ENCODE measurements at regions of chr11 and their contacts with region 1.

Region 1: GRCh38 chr11:107898270-107898669 is 30.0 kb upstream of the RAB39A start:
- DNase-seq: peak in 3 of 14 experiments; percentile 35 to 47 (median 36)
- ATAC-seq: peak; percentile 61
- H3K4me3 ChIP-seq: no peak overlapping the region
- H3K4me3 Mint-ChIP-seq: no peak overlapping the region
- H3K27ac ChIP-seq: no peak overlapping the region
- H3K27ac Mint-ChIP-seq: no peak overlapping the region
- H3K4me1 ChIP-seq: no peaks in the 10 kb centered on the region
- H3K4me1 Mint-ChIP-seq: no peaks in the 10 kb centered on the region
- H3K27me3 ChIP-seq: no peaks in the 10 kb centered on the region
- H3K27me3 Mint-ChIP-seq: peaks cover 4% of the 10 kb centered on the region
- CTCF ChIP-seq: peak; percentile 66

Region 2: GRCh38 chr11:107549253-107549953 is 348.9 kb before region 1 on chr11:
- CTCF ChIA-PET with region 1: no interaction called
- POLR2A ChIA-PET with region 1: no interaction called
- intact Hi-C with region 1: loop called in 1 of 2 experiments (anchors 5 kb)
- DNase-seq: peak in 7 of 14 experiments; percentile 4 to 69 (median 36)
- ATAC-seq: peak; percentile 67
- H3K4me3 ChIP-seq: no peak overlapping the region
- H3K4me3 Mint-ChIP-seq: no peak overlapping the region
- H3K27ac ChIP-seq: no peak overlapping the region
- H3K27ac Mint-ChIP-seq: no peak overlapping the region
- H3K4me1 ChIP-seq: no peaks in the 10 kb centered on the region
- H3K4me1 Mint-ChIP-seq: peaks cover 4% of the 10 kb centered on the region
- H3K27me3 ChIP-seq: no peaks in the 10 kb centered on the region
- H3K27me3 Mint-ChIP-seq: no peaks in the 10 kb centered on the region
- CTCF ChIP-seq: peak; percentile 92

Region 3: GRCh38 chr11:107573438-107573837 is 324.8 kb before region 1 on chr11:
- CTCF ChIA-PET with region 1: no interaction called
- POLR2A ChIA-PET with region 1: no interaction called
- intact Hi-C with region 1: loop called (anchors 1 to 2 kb)
- DNase-seq: no peak
- ATAC-seq: no peak
- H3K4me3 ChIP-seq: no peak overlapping the region
- H3K4me3 Mint-ChIP-seq: no peak overlapping the region
- H3K27ac ChIP-seq: no peak overlapping the region
- H3K27ac Mint-ChIP-seq: no peak overlapping the region
- H3K4me1 ChIP-seq: no peaks in the 10 kb centered on the region
- H3K4me1 Mint-ChIP-seq: no peaks in the 10 kb centered on the region
- H3K27me3 ChIP-seq: peaks cover 0 to 4% of the 10 kb centered on the region in 2 experiments
- H3K27me3 Mint-ChIP-seq: peaks cover 13% of the 10 kb centered on the region
- CTCF ChIP-seq: no peak

Region 4: DNA sequence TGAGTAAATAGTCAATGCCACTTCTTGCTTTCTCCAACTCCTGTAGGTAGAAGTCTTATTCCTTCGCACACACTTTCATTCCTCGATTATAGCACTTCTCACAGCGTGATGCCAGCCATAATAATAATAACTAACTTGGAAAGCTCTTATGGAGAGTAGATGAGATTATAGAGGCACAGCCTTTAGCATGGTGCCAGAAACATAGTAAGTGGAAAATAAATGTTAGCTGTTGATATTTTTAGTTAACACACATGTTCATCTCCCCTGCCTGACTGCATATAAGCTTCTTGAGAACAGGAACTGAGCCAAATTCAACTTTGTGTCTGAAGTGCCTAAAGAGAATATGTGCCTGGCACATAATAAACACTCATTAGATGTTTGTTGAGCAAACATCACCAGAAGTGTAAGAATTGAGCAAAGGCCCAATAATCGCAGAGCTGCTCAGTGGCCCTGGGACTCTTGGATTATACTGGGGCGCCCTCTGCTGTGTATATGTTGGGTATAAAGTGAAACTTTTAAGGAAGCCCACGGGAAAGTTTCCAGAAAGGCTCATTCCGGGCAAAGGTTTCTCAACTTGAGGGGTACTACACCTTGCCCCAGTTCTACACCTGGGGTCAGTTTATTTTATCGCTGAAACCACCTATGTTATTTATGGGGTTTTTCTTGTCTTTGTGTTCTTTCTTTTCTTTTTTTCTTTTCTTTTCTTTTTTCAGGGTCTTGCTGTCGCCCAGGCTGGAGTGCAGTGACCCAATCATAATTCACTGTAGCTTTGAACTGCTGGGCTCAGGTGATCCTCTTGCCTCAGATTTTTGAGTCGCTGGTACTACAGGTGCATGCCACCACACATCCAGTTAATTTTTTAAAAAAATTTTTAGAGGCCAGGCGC is 208.7 kb before region 1 on chr11:
- CTCF ChIA-PET with region 1: no interaction called
- POLR2A ChIA-PET with region 1: no interaction called
- intact Hi-C with region 1: loop called in 1 of 2 experiments (anchors 10 kb)
- DNase-seq: peak; percentile 13 to 67 (median 42)
- ATAC-seq: peak; percentile 44
- H3K4me3 ChIP-seq: no peak overlapping the region
- H3K4me3 Mint-ChIP-seq: no peak overlapping the region
- H3K27ac ChIP-seq: no peak overlapping the region
- H3K27ac Mint-ChIP-seq: no peak overlapping the region
- H3K4me1 ChIP-seq: no peaks in the 10 kb centered on the region
- H3K4me1 Mint-ChIP-seq: no peaks in the 10 kb centered on the region
- H3K27me3 ChIP-seq: peaks cover 3 to 15% of the 10 kb centered on the region in 2 experiments
- H3K27me3 Mint-ChIP-seq: peaks cover 29% of the 10 kb centered on the region
- CTCF ChIP-seq: peak; percentile 29

Region 5: DNA sequence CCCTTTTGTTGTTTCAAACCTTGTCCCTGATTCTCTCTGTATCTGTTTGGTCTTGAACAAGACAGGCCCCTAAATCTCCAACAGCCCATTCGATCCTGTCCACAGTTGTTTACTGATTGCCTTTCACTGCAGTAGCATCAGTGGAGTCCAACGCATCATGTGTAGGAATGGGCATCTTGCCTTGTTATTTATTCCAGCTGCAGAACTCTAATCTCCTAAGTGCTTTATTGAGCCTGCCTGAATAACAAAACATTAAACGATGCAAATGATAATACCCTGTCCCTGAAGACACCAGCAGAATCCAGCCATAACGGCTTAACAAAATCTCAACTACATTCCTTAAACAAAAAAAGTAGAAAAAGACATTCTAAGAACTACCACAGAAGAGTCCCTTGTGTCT is 89.7 kb before region 1 on chr11:
- CTCF ChIA-PET with region 1: no interaction called
- POLR2A ChIA-PET with region 1: no interaction called
- intact Hi-C with region 1: loop called in 1 of 2 experiments (anchors 5 kb)
- DNase-seq: no peak
- ATAC-seq: no peak
- H3K4me3 ChIP-seq: no peak overlapping the region
- H3K4me3 Mint-ChIP-seq: no peak overlapping the region
- H3K27ac ChIP-seq: no peak overlapping the region
- H3K27ac Mint-ChIP-seq: no peak overlapping the region
- H3K4me1 ChIP-seq: no peaks in the 10 kb centered on the region
- H3K4me1 Mint-ChIP-seq: no peaks in the 10 kb centered on the region
- H3K27me3 ChIP-seq: no peaks in the 10 kb centered on the region
- H3K27me3 Mint-ChIP-seq: no peaks in the 10 kb centered on the region
- CTCF ChIP-seq: no peak

Measured in CD4-positive, alpha-beta T cell (primary cell).